Endothelial cell of umbilical vein (primary cell): ENCODE measurements at regions of chr10 and their contacts with region 1.

Region 1: GRCh38 chr10:109883859-109884771 is 39.2 kb downstream of the XPNPEP1 start:
- DNase-seq: peak; percentile 93
- H3K4me3 ChIP-seq: no peak overlapping the region
- H3K27ac ChIP-seq: peak overlapping the region; percentile 68
- H3K4me1 ChIP-seq: peaks cover 10% of the 10 kb centered on the region
- H3K27me3 ChIP-seq: no peaks in the 10 kb centered on the region
- CTCF ChIP-seq: peak; percentile 92 to 97
- POLR2A ChIP-seq: no peak

Region 2: GRCh38 chr10:109902934-109903589 is 18.9 kb after region 1 on chr10:
- CTCF ChIA-PET with region 1: interaction called, 68 read pairs
- POLR2A ChIA-PET with region 1: no interaction called
- dilution Hi-C with region 1: no loop called
- intact Hi-C with region 1: no loop called
- DNase-seq: no peak
- H3K4me3 ChIP-seq: no peak overlapping the region
- H3K27ac ChIP-seq: no peak overlapping the region
- H3K4me1 ChIP-seq: peaks cover 19% of the 10 kb centered on the region
- H3K27me3 ChIP-seq: no peaks in the 10 kb centered on the region
- CTCF ChIP-seq: no peak
- POLR2A ChIP-seq: no peak

Region 3: GRCh38 chr10:109966961-109967738 is 83.0 kb after region 1 on chr10:
- CTCF ChIA-PET with region 1: interaction called, 28 read pairs
- POLR2A ChIA-PET with region 1: no interaction called
- dilution Hi-C with region 1: no loop called
- intact Hi-C with region 1: loop called (anchors 1 kb)
- DNase-seq: peak; percentile 87
- H3K4me3 ChIP-seq: peak overlapping the region in 2 of 3 experiments; percentile 4 to 23
- H3K27ac ChIP-seq: peak overlapping the region; percentile 66
- H3K4me1 ChIP-seq: peaks cover 33% of the 10 kb centered on the region
- H3K27me3 ChIP-seq: no peaks in the 10 kb centered on the region
- CTCF ChIP-seq: no peak
- POLR2A ChIP-seq: no peak

Region 4: GRCh38 chr10:110035070-110035921 is 151.2 kb after region 1 on chr10:
- CTCF ChIA-PET with region 1: interaction called, 12 read pairs
- POLR2A ChIA-PET with region 1: interaction called, 6 read pairs
- dilution Hi-C with region 1: no loop called
- intact Hi-C with region 1: no loop called
- DNase-seq: no peak
- H3K4me3 ChIP-seq: no peak overlapping the region
- H3K27ac ChIP-seq: no peak overlapping the region
- H3K4me1 ChIP-seq: peaks cover 21% of the 10 kb centered on the region
- H3K27me3 ChIP-seq: no peaks in the 10 kb centered on the region
- CTCF ChIP-seq: no peak
- POLR2A ChIP-seq: no peak

Region 5: DNA sequence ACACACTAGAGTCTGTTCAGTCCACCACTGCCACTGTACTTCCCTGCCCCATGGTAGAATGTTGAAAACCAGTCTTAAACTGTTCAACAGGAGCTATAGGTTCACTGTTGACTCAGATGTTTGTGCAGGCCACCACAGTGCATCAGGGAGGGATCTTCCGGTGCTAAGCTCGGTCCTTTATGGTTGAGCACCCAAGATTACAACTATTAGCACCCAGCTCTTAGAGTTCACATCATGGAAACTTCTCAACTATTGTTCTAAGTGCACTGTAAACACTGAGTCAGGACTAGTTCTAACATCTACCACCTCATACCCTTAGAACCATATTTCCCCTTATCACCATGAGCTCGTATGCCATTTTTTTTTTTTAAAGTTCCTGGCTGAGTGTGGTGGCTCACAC is 226.2 kb after region 1 on chr10:
- CTCF ChIA-PET with region 1: interaction called, 13 read pairs
- POLR2A ChIA-PET with region 1: no interaction called
- dilution Hi-C with region 1: no loop called
- intact Hi-C with region 1: no loop called
- DNase-seq: no peak
- H3K4me3 ChIP-seq: no peak overlapping the region
- H3K27ac ChIP-seq: no peak overlapping the region
- H3K4me1 ChIP-seq: no peaks in the 10 kb centered on the region
- H3K27me3 ChIP-seq: no peaks in the 10 kb centered on the region
- CTCF ChIP-seq: no peak
- POLR2A ChIP-seq: no peak

Region 6: GRCh38 chr10:110210674-110211464 is 326.8 kb after region 1 on chr10:
- CTCF ChIA-PET with region 1: interaction called, 38 read pairs
- POLR2A ChIA-PET with region 1: interaction called, 4 read pairs
- dilution Hi-C with region 1: no loop called
- intact Hi-C with region 1: loop called (anchors 1 kb)
- DNase-seq: peak; percentile 99
- H3K4me3 ChIP-seq: peak overlapping the region; percentile 48 to 68 (median 57)
- H3K27ac ChIP-seq: no peak overlapping the region
- H3K4me1 ChIP-seq: peaks cover 4% of the 10 kb centered on the region
- H3K27me3 ChIP-seq: peaks cover 21 to 29% of the 10 kb centered on the region in 2 experiments
- CTCF ChIP-seq: no peak
- POLR2A ChIP-seq: no peak